H1 (cell line): ENCODE measurements at regions of chr7 and their contacts with region 1.

Region 1: GRCh38 chr7:98841179-98841997 is 28.4 kb downstream of the TMEM130 start:
- DNase-seq: peak in 1 of 2 experiments; percentile 96
- H3K4me3 ChIP-seq: no peak overlapping the region
- H3K27ac ChIP-seq: no peak overlapping the region
- H3K4me1 ChIP-seq: peaks cover 0 to 5% (median 2%) of the 10 kb centered on the region in 4 experiments; a peak in 4 of 7 replicates
- H3K27me3 ChIP-seq: no peaks in the 10 kb centered on the region
- CTCF ChIP-seq: peak; percentile 94 to 98 (median 95)
- EP300 ChIP-seq: no peak
- POLR2A ChIP-seq: no peak
- RAD21 ChIP-seq: peak; percentile 97 to 99

Region 2: DNA sequence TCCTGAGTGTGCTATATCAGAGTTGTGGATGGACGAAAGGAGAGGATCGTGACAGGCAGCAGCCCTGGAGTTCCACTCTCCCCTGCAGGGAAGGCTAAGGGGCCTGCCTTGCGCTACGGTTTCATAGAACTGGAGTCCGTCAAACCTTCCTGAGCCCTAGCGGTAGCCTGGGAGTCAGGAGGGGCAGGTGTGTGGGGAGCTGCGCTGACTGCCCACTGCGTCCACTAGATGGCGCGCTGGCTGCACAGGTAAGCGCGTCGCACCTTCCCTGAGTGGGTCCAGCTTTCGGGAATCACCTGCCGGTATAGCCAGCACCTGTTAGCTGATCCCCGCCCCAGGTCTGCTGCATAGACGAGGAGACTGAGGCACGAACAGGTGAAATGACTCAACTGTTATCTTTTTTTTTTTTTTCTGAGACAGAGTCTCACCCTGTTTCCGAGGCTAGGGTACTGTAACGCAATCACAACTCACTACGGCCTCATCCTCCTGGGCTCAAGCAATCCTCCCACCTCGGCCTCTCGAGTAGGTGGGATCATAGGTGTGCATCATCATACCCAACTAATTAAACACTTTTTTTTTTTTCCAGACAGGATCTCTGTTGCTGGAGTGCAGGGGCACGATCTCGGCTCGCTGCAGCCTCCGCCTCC is 420.3 kb before region 1 on chr7:
- CTCF ChIA-PET with region 1: interaction called, 365 read pairs
- POLR2A ChIA-PET with region 1: no interaction called
- DNase-seq: peak; percentile 75 to 91
- H3K4me3 ChIP-seq: no peak overlapping the region
- H3K27ac ChIP-seq: no peak overlapping the region
- H3K4me1 ChIP-seq: no peaks in the 10 kb centered on the region
- H3K27me3 ChIP-seq: peaks cover 0 to 2% (median 0%) of the 10 kb centered on the region in 4 experiments; a peak in 1 of 7 replicates
- CTCF ChIP-seq: peak; percentile 99 to 100 (median 100)
- EP300 ChIP-seq: no peak
- POLR2A ChIP-seq: no peak
- RAD21 ChIP-seq: peak; percentile 95 to 99

Region 3: DNA sequence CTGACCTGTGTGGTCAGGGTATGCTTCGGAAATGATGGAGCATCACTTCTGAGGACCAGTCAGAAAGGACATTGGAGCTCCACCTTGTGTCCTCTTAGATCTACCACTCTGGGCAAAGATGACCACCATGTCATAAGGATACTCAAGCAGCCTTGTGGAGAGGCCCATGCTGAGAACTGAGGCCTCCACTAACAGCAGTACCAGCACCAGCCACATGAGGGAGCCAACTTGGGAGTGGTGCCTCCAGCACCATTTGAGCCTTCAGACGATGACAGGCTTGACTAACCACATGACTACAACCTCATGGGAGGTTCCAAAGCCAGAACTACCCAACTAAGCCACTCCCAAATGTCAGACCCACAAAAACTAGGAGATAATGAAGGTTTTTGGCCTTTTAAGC is 108.4 kb before region 1 on chr7:
- CTCF ChIA-PET with region 1: interaction called, 19 read pairs
- POLR2A ChIA-PET with region 1: no interaction called
- DNase-seq: peak in 1 of 2 experiments; percentile 96
- H3K4me3 ChIP-seq: no peak overlapping the region
- H3K27ac ChIP-seq: no peak overlapping the region
- H3K4me1 ChIP-seq: peaks cover 0 to 12% (median 2%) of the 10 kb centered on the region in 4 experiments; a peak in 4 of 7 replicates
- H3K27me3 ChIP-seq: no peaks in the 10 kb centered on the region
- CTCF ChIP-seq: peak; percentile 70 to 97 (median 92)
- EP300 ChIP-seq: no peak
- POLR2A ChIP-seq: no peak
- RAD21 ChIP-seq: peak; percentile 58 to 74

Region 4: DNA sequence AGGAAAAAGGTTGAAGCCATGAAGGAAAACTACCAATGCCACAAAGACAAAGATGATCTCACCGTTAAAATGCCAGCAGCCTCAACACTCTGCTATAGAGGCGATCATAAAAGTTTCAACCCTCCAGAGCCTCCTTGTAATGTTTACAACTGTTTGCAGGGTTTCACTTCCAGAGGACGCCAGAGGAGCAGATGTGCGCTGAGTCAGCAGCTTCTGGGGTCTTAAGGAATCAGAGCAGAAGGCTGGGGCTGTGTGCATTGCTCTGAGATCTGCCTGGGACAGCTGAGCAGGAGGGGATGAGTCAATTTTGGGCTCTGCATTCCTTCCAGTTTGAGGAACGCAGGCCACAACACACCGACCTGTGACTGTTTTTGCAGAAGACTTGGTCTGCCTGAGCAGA is 69.9 kb before region 1 on chr7:
- CTCF ChIA-PET with region 1: interaction called, 10 read pairs
- POLR2A ChIA-PET with region 1: no interaction called
- DNase-seq: no peak
- H3K4me3 ChIP-seq: peak overlapping the region in 3 of 4 experiments; percentile 26 to 45 (median 40); a peak in 6 of 8 replicates
- H3K27ac ChIP-seq: no peak overlapping the region
- H3K4me1 ChIP-seq: peaks cover 4 to 16% (median 8%) of the 10 kb centered on the region in 4 experiments
- H3K27me3 ChIP-seq: peaks cover 0 to 7% (median under 1%) of the 10 kb centered on the region in 4 experiments; a peak in 3 of 7 replicates
- CTCF ChIP-seq: no peak
- EP300 ChIP-seq: no peak
- POLR2A ChIP-seq: no peak
- RAD21 ChIP-seq: no peak

Region 5: GRCh38 chr7:98855610-98856422 is 14.4 kb after region 1 on chr7:
- CTCF ChIA-PET with region 1: interaction called, 224 read pairs
- POLR2A ChIA-PET with region 1: no interaction called
- DNase-seq: no peak
- H3K4me3 ChIP-seq: no peak overlapping the region
- H3K27ac ChIP-seq: no peak overlapping the region
- H3K4me1 ChIP-seq: peaks cover 0 to 9% (median 6%) of the 10 kb centered on the region in 4 experiments; a peak in 5 of 7 replicates
- H3K27me3 ChIP-seq: no peaks in the 10 kb centered on the region; a peak in 1 of 7 replicates
- CTCF ChIP-seq: no peak
- EP300 ChIP-seq: no peak
- POLR2A ChIP-seq: no peak
- RAD21 ChIP-seq: no peak

Region 6: GRCh38 chr7:98913612-98914011 is 72.2 kb after region 1 on chr7:
- CTCF ChIA-PET with region 1: no interaction called
- POLR2A ChIA-PET with region 1: no interaction called
- DNase-seq: no peak
- H3K4me3 ChIP-seq: no peak overlapping the region
- H3K27ac ChIP-seq: no peak overlapping the region
- H3K4me1 ChIP-seq: no peaks in the 10 kb centered on the region
- H3K27me3 ChIP-seq: no peaks in the 10 kb centered on the region
- CTCF ChIP-seq: no peak
- EP300 ChIP-seq: no peak
- POLR2A ChIP-seq: no peak
- RAD21 ChIP-seq: no peak